ENCODE measurements at regions of chr17 and their contacts with region 1.

Region 1: GRCh38 chr17:75182569-75183450 is at the start of gene SUMO2:
- DNase-seq: peak; percentile 99
- H3K4me3 Mint-ChIP-seq: peak within 1 kb of the TSS; percentile 92
- H3K27ac Mint-ChIP-seq: peak within 1 kb of the TSS; percentile 96
- H3K4me1 Mint-ChIP-seq: peaks cover 36% of the 10 kb centered on the region
- H3K27me3 Mint-ChIP-seq: no peaks in the 10 kb centered on the region
- total RNA-seq, gene SUMO2: 658 and 659 TPM in 2 replicates

Region 2: GRCh38 chr17:75131280-75132017 is 51.4 kb before region 1 on chr17 and contains the start of gene NT5C:
- intact Hi-C with region 1: loop called (anchors 5 kb)
- DNase-seq: peak; percentile 92
- H3K4me3 Mint-ChIP-seq: peak within 1 kb of the TSS; percentile 91
- H3K27ac Mint-ChIP-seq: peak within 1 kb of the TSS; percentile 88
- H3K4me1 Mint-ChIP-seq: peaks cover 19% of the 10 kb centered on the region
- H3K27me3 Mint-ChIP-seq: no peaks in the 10 kb centered on the region
- total RNA-seq, gene NT5C: 76.5 and 84.7 TPM in 2 replicates

Region 3: DNA sequence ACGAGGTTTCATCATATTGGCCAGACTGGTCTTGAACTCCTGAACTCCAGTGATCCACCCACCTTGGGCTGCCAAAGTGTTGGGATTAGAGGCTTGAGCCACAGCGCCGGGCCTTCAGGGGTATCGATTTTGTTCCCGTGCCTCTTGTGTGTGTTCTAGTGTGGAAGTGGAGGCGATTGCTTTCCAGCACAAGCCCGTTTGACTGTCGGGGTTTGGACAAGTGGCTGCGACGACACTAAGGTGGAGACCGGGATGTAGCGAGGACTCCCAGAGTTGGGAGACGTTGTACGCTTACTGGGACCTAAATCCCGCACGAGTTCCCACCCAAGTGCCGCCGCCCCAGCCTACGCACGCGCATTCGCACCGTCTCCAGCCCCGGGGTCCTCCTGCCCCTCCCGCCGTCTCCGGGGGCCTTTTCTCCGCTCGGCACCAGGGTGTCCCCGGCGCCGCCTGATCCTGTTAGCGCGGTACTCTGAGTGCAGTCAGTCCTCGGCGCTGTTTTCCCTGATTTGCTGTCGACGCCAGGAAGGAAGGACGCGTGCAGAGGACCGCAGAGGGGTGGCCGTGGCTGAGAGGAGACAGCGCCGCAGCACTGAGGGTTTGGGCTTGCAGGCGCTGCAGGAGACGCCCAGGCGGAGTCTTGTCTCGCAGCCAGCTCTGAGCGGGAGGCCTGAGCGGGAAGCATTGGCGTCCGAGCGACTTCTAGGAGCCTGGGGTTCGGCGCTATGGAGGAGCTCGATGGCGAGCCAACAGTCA is 22.4 kb after region 1 on chr17 and contains the start of gene NUP85:
- intact Hi-C with region 1: loop called (anchors 2 kb)
- DNase-seq: peak; percentile 98
- H3K4me3 Mint-ChIP-seq: peak within 1 kb of the TSS; percentile 97
- H3K27ac Mint-ChIP-seq: peak within 1 kb of the TSS; percentile 99
- H3K4me1 Mint-ChIP-seq: peaks cover 14% of the 10 kb centered on the region
- H3K27me3 Mint-ChIP-seq: no peaks in the 10 kb centered on the region
- total RNA-seq, gene NUP85: 125 and 136 TPM in 2 replicates

Region 4: DNA sequence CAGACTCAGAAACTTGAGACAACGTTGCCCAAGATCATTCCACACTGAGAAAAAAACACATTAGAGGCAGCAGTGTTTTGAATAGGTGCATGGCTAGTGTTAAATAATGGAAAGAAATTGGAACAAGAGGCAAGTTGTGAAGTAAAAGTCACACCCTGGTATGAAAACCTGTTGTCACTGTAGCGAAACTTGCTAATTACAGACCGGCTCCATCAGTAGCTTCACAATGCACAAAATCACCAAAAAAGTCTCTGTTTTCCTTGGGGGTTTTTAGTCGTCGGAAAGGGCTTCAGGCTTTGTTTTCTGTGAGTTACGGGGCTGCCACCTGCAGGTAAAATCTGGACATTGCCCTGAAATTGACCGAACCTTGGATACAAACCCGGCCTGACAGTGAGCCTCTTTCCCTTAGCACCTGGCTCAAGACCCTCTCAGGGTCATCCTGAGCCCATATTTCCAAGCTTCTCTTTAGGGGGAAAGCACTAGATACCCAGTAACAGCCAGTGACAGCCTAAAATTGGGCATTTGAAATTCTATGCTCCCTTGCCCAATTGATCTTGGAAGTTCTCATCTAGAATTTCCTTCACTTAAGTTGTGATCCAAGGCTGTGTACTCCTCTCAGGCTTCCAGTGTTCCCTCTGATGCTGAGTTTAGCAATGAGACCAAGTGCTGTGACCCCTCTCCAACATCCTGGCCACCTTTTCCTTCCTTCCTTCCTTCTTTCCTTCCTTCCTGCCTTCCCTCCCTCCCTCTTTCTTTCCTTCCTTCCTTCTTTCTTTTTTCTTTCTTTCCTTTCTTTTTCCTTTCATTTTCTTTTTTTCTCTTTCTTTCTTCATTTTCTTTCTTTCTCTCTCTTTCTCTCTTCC is 229.9 kb after region 1 on chr17:
- intact Hi-C with region 1: loop called (anchors 5 kb)
- DNase-seq: peak; percentile 93
- H3K4me3 Mint-ChIP-seq: peak overlapping the region; percentile 8
- H3K27ac Mint-ChIP-seq: no peak overlapping the region
- H3K4me1 Mint-ChIP-seq: peaks cover 28% of the 10 kb centered on the region
- H3K27me3 Mint-ChIP-seq: peaks cover 16% of the 10 kb centered on the region

Measured in activated CD4-positive, alpha-beta T cell treated with anti-CD3 and anti-CD28 coated beads, Interleukin-2, amount 10 ng/mL, durations not matched to agents 24 days and 14 days (primary cell).